ENCODE measurements at regions of chr17 and their contacts with region 1.

Region 1: GRCh38 chr17:42577532-42578281 is at the start of gene PSMC3IP:
- H3K4me3 ChIP-seq: peak within 1 kb of the TSS; percentile 91
- H3K27ac ChIP-seq: peak within 1 kb of the TSS; percentile 92
- H3K4me1 ChIP-seq: peaks cover 4% of the 10 kb centered on the region
- CTCF ChIP-seq: peak; percentile 75

Region 2: GRCh38 chr17:42566883-42567573 is 10.7 kb before region 1 on chr17 and contains the start of gene MLX:
- CTCF ChIA-PET with region 1: interaction called, 34 read pairs
- POLR2A ChIA-PET with region 1: interaction called, 48 read pairs
- H3K4me3 ChIP-seq: peak within 1 kb of the TSS; percentile 86
- H3K27ac ChIP-seq: peak within 1 kb of the TSS; percentile 86
- H3K4me1 ChIP-seq: peaks cover 10% of the 10 kb centered on the region; the same call in 1 of the 2 replicates
- CTCF ChIP-seq: peak; percentile 86

Region 3: DNA sequence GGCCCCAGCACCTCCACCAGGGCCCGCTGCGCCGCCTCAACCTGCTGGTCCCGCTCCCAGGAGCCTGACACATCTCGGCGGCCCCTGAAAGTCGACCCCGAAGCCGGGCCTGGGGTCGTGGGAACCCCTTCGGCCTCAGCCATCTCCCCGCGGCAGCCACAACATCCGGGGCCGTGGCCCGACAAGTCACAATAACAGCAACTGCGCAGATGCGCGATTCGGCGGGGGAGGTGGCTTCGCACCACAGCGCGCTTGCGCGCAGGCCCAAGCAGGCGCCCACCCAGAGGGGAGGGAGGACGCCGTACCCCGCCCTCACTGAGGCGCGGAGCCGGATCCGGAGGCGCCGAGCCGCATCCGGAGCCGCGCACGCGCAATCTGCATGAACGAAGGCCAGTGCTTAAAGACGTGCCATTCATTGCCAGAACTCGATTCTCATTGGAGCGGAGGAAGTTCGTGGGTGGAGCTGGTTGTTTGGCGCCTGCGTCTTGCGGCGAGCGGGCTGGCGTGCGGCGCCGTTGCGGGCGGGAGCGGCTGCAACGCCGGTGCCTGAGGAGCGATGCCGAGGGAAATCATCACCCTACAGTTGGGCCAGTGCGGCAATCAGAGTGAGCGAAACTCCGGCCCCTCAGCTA is 31.6 kb after region 1 on chr17 and contains the starts of genes RETREG3 and TUBG1:
- CTCF ChIA-PET with region 1: interaction called, 15 read pairs
- POLR2A ChIA-PET with region 1: interaction called, 40 read pairs
- H3K4me3 ChIP-seq: peak within 1 kb of the TSS; percentile 76
- H3K27ac ChIP-seq: peak within 1 kb of the TSS; percentile 78
- H3K4me1 ChIP-seq: peaks cover 14% of the 10 kb centered on the region
- CTCF ChIP-seq: no peak; the same call in 1 of the 2 replicates

Region 4: DNA sequence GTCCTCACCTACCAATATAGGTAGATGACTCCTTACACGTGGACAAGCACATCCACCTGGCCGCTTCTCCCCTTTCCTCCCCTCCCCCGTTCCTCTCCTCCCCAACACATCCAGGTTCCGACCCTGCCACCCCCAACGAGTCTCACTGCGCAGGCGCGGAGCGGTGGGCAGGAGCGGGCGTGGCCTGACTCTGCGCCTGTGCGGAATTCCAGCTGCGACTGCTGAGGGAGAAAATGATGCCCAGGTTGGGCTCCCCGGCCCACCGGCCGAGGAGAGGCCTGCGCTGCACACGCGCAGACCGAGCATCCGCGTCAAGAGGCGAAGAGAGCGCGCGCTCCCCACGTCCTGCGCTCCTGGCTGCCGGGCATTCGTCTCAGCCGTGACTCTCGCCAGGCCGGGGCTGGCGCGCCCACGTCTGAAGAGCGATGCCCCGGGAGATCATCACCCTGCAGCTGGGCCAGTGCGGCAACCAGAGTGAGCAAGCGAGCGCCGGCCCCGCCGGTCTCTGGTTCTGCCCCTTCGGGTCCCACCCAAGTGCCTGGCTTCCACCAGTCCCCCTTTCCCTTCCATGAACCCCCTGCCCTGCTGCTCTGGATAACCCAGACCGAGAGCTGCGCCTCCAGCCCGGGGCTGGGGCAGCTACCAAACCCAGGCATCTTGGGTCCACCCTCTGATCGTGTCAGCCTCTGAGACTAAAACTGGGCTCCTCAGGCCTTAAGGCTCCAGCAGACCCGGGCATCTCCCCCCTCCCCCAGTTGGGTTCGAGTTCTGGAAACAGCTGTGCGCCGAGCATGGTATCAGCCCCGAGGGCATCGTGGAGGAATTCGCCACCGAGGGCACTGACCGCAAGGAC is 81.6 kb after region 1 on chr17 and contains the start of gene TUBG2:
- CTCF ChIA-PET with region 1: interaction called, 11 read pairs
- POLR2A ChIA-PET with region 1: interaction called, 3 read pairs
- H3K4me3 ChIP-seq: peak within 1 kb of the TSS; percentile 70
- H3K27ac ChIP-seq: peak within 1 kb of the TSS; percentile 84
- H3K4me1 ChIP-seq: peaks cover 13% of the 10 kb centered on the region
- CTCF ChIP-seq: no peak

Region 5: DNA sequence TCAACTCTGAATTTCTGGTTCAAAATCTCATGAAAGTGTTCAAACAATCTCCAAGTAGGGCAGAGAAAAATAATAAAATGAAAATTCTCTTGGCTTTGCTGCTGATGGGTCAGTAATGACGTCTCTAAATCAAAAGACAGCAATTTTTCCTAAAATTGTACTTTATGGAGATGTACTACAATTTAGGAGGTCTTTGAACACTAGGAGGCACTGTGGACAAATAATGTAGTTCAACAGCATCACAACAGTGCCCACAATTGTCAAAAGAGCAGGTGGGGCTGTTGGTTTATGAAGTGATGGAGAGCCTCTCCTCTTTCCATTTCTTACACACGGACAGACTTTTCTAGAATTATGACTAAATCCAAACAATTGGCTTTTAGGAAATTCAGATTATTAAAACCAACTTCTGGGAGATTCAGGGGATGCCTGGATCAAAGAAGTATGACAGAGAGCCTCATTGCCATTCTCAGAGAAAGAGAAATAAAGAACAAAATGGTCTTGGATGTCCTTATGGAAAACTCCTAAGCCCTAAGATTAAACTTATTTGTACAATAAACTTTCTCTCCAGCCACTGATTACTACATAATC is 143.4 kb after region 1 on chr17:
- CTCF ChIA-PET with region 1: interaction called, 10 read pairs
- POLR2A ChIA-PET with region 1: interaction called, 3 read pairs
- H3K4me3 ChIP-seq: no peak overlapping the region
- H3K27ac ChIP-seq: no peak overlapping the region
- H3K4me1 ChIP-seq: no peaks in the 10 kb centered on the region
- CTCF ChIP-seq: no peak

Region 6: DNA sequence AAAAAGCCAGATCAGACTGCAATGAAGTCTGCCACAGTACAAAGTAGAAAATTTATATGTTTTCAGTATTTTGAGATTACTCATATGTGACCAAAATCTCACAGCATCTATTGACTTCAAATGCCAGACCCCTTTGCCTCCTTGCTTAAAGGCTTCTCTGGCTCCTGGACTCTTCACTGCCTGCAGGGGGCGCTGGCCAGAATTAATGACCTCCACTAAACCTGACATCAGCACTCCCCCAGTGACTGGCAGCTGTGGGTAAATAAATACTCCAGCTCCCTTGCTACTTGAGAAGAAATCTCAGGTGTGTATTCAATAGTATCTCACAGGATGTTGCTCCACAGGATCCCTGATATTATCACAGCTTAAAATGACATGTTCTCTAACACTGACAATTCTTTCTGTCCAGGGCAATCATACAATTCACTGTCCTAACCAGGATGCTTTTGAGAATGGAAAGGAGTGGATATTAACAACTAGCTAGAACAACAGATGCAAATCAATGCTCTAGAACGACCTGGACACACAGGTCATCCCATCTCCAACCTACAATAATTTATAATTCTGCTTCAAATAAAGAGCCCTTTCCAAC is 242.3 kb after region 1 on chr17:
- CTCF ChIA-PET with region 1: interaction called, 26 read pairs
- POLR2A ChIA-PET with region 1: interaction called, 10 read pairs
- H3K4me3 ChIP-seq: no peak overlapping the region
- H3K27ac ChIP-seq: no peak overlapping the region
- H3K4me1 ChIP-seq: peaks cover 4% of the 10 kb centered on the region; the same call in 1 of the 2 replicates
- CTCF ChIP-seq: no peak